PC-3 (cell line): ENCODE measurements at regions of chr3 and their contacts with region 1.

Region 1: GRCh38 chr3:161220850-161221753 is at the start of gene NMD3:
- DNase-seq: peak; percentile 98
- ATAC-seq: peak; percentile 80
- H3K4me3 ChIP-seq: peak within 1 kb of the TSS; percentile 96
- H3K27ac ChIP-seq: peak within 1 kb of the TSS; percentile 72
- H3K4me1 ChIP-seq: peaks cover 41% of the 10 kb centered on the region
- H3K27me3 ChIP-seq: no peaks in the 10 kb centered on the region
- CTCF ChIP-seq: no peak
- total RNA-seq, gene NMD3: 65.3 and 72.6 TPM in 2 replicates

Region 2: GRCh38 chr3:160565442-160566403 is 655.4 kb before region 1 on chr3 and contains the start of gene KPNA4:
- CTCF ChIA-PET with region 1: no interaction called
- POLR2A ChIA-PET with region 1: no interaction called
- intact Hi-C with region 1: loop called (anchors 10 kb)
- DNase-seq: peak; percentile 99
- ATAC-seq: peak; percentile 84
- H3K4me3 ChIP-seq: peak within 1 kb of the TSS; percentile 79
- H3K27ac ChIP-seq: peak within 1 kb of the TSS; percentile 99
- H3K4me1 ChIP-seq: peaks cover 45% of the 10 kb centered on the region
- H3K27me3 ChIP-seq: no peaks in the 10 kb centered on the region
- CTCF ChIP-seq: no peak
- total RNA-seq, gene KPNA4: 31.5 and 33.7 TPM in 2 replicates

Region 3: DNA sequence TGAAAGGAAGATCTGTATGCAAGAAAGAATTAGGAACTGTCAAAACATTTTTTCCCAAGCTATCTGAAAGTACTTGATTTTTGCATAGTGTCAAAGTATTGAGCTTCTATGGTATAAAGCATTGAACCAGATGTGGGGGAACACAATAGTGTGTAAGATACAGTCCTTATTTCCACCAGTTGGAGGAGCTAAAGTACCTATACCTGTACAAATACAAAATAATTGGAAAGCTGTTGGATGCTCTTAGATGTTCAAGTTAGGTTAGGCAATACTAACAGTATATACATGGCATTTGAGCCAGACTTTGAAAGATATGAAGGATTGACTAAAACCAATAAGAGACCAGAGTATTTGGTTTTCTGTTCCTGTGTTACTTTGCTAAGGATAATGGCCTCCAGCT is 264.3 kb before region 1 on chr3:
- CTCF ChIA-PET with region 1: no interaction called
- POLR2A ChIA-PET with region 1: no interaction called
- intact Hi-C with region 1: loop called (anchors 5 kb)
- DNase-seq: peak; percentile 74
- ATAC-seq: peak; percentile 92
- H3K4me3 ChIP-seq: no peak overlapping the region
- H3K27ac ChIP-seq: no peak overlapping the region
- H3K4me1 ChIP-seq: no peaks in the 10 kb centered on the region
- H3K27me3 ChIP-seq: no peaks in the 10 kb centered on the region
- CTCF ChIP-seq: peak; percentile 86

Region 4: GRCh38 chr3:161096771-161097355 is 124.2 kb before region 1 on chr3:
- CTCF ChIA-PET with region 1: no interaction called
- POLR2A ChIA-PET with region 1: no interaction called
- intact Hi-C with region 1: loop called (anchors 5 kb)
- DNase-seq: peak; percentile 72
- ATAC-seq: peak; percentile 77
- H3K4me3 ChIP-seq: no peak overlapping the region
- H3K27ac ChIP-seq: no peak overlapping the region
- H3K4me1 ChIP-seq: 0 out of 2 replicates have a peak, but pooled peaks cover 11% of the 10 kb centered on the region
- H3K27me3 ChIP-seq: no peaks in the 10 kb centered on the region
- CTCF ChIP-seq: peak; percentile 93

Region 5: DNA sequence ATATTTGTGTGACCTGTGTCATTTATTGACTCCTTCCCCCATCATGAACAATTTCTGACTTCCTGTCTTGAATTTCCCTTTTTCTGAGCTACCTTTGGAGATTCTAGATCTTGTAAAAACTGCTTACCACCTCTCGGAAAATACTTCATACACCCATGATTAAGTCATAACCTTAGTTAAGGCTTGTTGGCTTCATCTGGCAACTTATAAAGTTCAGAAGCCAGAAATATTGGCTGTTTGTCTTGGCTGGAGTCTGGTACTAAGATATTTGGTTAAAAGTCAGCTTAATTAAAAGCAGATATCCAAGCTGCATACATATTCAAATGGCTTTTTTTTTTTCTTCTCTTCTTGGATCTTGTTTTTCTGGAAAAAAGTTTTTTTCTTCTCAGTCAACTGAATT is 78.6 kb before region 1 on chr3:
- CTCF ChIA-PET with region 1: no interaction called
- POLR2A ChIA-PET with region 1: no interaction called
- intact Hi-C with region 1: loop called (anchors 5 kb)
- DNase-seq: peak; percentile 35
- ATAC-seq: peak; percentile 27
- H3K4me3 ChIP-seq: no peak overlapping the region
- H3K27ac ChIP-seq: peak overlapping the region; percentile 94
- H3K4me1 ChIP-seq: peaks cover 40% of the 10 kb centered on the region
- H3K27me3 ChIP-seq: no peaks in the 10 kb centered on the region
- CTCF ChIP-seq: no peak

Region 6: GRCh38 chr3:161266731-161267166 is 45.6 kb after region 1 on chr3:
- CTCF ChIA-PET with region 1: no interaction called
- POLR2A ChIA-PET with region 1: no interaction called
- intact Hi-C with region 1: loop called (anchors 5 kb)
- DNase-seq: peak; percentile 84
- ATAC-seq: peak; percentile 77
- H3K4me3 ChIP-seq: peak overlapping the region; percentile 50; the same call in 1 of the 2 replicates
- H3K27ac ChIP-seq: peak overlapping the region; percentile 98
- H3K4me1 ChIP-seq: peaks cover 52% of the 10 kb centered on the region
- H3K27me3 ChIP-seq: no peaks in the 10 kb centered on the region
- CTCF ChIP-seq: no peak